Activated CD4-positive, alpha-beta memory T cell treated with anti-CD3 and anti-CD28 coated beads for 36 hours (primary cell): ENCODE measurements at regions of chr17 and their contacts with region 1.

Region 1: DNA sequence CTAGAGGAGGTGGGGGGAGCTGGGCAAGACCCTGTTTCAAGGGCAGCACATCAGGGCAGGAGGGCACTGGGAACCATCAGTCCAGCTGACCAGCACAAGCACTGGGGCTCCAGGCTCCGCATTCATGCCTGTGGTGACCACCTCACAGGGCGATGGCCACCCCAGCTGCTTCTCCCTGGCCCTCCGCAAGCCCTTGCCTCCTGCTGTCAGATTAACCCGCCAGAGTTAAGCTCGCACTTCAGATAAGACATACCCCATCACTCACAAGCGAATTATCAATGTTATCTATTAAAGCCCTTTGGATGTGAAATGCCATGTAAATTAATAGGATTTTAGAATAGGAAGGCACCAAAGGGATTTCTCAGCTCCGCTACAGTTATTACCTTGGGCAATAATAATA is 105.0 kb downstream of the CCDC182 start:
- DNase-seq: no peak
- H3K4me3 Mint-ChIP-seq: no peak overlapping the region
- H3K27ac Mint-ChIP-seq: no peak overlapping the region
- H3K4me1 Mint-ChIP-seq: peaks cover 4% of the 10 kb centered on the region
- H3K27me3 Mint-ChIP-seq: no peaks in the 10 kb centered on the region

Region 2: DNA sequence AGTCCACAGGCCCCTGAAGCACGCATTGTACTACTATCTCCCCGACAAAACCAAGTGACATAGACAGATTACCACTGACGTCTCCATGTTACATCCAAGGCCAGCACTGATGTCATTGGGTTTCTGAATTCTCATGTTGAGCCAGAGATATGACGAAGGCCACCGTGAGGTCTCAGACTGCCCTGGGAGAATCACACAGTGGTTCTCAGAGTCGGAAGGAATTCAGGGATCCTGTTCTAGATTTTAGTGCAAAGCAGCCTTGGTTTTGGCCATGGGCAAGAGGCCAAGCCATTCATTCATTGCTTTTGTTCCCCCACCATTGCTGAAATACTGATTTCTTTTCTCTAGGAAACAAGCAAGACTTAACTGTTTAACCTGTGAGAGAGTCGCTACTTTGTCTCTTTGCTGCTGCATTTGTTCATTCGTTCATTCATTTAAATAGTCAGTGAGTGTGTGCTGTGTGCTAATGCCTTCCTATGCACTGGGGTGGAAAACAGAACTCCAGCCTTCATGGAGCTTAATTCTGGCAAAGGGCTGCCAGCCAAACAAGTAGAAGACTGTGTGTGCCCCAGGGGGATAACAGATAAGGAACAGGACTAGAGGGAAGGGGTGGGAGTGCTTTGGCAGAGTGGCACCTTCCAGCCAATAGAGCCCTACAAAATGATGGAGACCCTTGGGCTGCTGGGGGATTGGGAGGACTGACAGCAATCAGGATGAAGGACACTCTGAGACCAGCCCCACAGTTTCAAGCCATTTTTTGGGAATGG is 161.4 kb before region 1 on chr17:
- CTCF ChIA-PET with region 1: no interaction called
- POLR2A ChIA-PET with region 1: no interaction called
- intact Hi-C with region 1: no loop called
- DNase-seq: no peak
- H3K4me3 Mint-ChIP-seq: no peak overlapping the region
- H3K27ac Mint-ChIP-seq: no peak overlapping the region
- H3K4me1 Mint-ChIP-seq: peaks cover 24% of the 10 kb centered on the region
- H3K27me3 Mint-ChIP-seq: no peaks in the 10 kb centered on the region

Region 3: GRCh38 chr17:57624386-57624785 is 15.7 kb before region 1 on chr17:
- CTCF ChIA-PET with region 1: no interaction called
- POLR2A ChIA-PET with region 1: no interaction called
- intact Hi-C with region 1: loop called (anchors 2 kb)
- DNase-seq: no peak
- H3K4me3 Mint-ChIP-seq: no peak overlapping the region
- H3K27ac Mint-ChIP-seq: no peak overlapping the region
- H3K4me1 Mint-ChIP-seq: peaks cover 24% of the 10 kb centered on the region
- H3K27me3 Mint-ChIP-seq: no peaks in the 10 kb centered on the region